ENCODE measurements at regions of chr20 and their contacts with region 1.

Region 1: GRCh38 chr20:2172305-2173175 is 70.9 kb downstream of the STK35 start:
- DNase-seq: peak; percentile 59 to 88
- ATAC-seq: peak; percentile 86 to 89
- H3K4me3 ChIP-seq: no peak overlapping the region; the same call in 2 of the 3 replicates
- H3K27ac ChIP-seq: no peak overlapping the region
- H3K4me1 ChIP-seq: no peaks in the 10 kb centered on the region
- CTCF ChIP-seq: peak; percentile 97
- EP300 ChIP-seq: no peak
- POLR2A ChIP-seq: no peak
- RAD21 ChIP-seq: peak; percentile 97

Region 2: DNA sequence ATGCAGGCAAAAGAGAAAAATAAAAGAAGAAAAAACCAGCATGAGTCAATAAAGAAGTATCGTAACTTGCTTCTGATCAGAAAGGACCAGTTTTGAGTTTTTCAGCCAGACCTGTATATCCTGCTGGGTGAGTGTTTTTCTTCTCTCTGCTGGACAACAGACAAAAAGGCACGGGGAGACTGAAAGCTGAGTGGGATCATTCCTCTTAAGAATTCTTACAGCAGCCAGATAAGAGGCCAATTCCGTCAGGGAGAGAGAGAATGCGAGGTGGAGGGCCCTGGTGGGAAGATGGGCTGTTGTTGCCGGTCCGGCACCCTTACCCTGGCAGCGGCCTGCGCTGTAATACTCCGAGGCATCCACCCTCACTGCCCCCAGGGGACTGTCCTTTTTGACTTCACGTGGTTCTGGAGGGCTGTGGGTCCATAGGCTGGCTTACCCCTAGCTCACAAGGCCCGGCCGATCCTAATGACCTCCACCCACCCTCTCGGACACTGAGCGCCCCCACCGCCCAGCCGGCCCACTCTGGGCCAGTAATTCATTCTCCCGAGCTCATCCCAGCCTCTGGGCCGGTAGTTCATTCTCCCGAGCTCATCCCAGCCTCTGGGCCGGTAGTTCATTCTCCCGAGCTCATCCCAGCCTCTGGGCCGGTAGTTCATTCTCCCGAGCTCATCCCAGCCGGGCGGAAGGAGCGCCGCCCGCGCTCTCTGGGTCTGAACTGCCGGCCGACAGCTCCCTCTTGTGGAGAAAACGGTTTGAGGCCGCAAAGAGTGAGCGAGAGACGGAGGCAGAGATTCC is 395.7 kb before region 1 on chr20:
- CTCF ChIA-PET with region 1: interaction called, 17 read pairs
- POLR2A ChIA-PET with region 1: no interaction called
- DNase-seq: peak; percentile 69 to 89
- ATAC-seq: peak; percentile 95 to 99
- H3K4me3 ChIP-seq: peak overlapping the region; percentile 79
- H3K27ac ChIP-seq: peak overlapping the region; percentile 80 to 91
- H3K4me1 ChIP-seq: peaks cover 20% of the 10 kb centered on the region
- CTCF ChIP-seq: peak; percentile 76
- EP300 ChIP-seq: no peak
- POLR2A ChIP-seq: peak; percentile 39; the same call in 1 of the 2 replicates
- RAD21 ChIP-seq: peak; percentile 71 to 82

Region 3: GRCh38 chr20:2000285-2000684 is 172.3 kb before region 1 on chr20:
- CTCF ChIA-PET with region 1: interaction called, 100 read pairs
- POLR2A ChIA-PET with region 1: no interaction called
- DNase-seq: no peak
- ATAC-seq: no peak
- H3K4me3 ChIP-seq: no peak overlapping the region
- H3K27ac ChIP-seq: no peak overlapping the region
- H3K4me1 ChIP-seq: no peaks in the 10 kb centered on the region
- CTCF ChIP-seq: no peak
- EP300 ChIP-seq: no peak
- POLR2A ChIP-seq: no peak
- RAD21 ChIP-seq: no peak

Region 4: GRCh38 chr20:2101865-2102584 is 70.5 kb before region 1 on chr20:
- CTCF ChIA-PET with region 1: interaction called, 30 read pairs
- POLR2A ChIA-PET with region 1: interaction called, 9 read pairs
- DNase-seq: peak; percentile 96 to 97
- ATAC-seq: peak; percentile 87 to 94
- H3K4me3 ChIP-seq: peak overlapping the region; percentile 92
- H3K27ac ChIP-seq: peak overlapping the region; percentile 97 to 98
- H3K4me1 ChIP-seq: peaks cover 26% of the 10 kb centered on the region; the same call in 2 of the 3 replicates
- CTCF ChIP-seq: no peak
- EP300 ChIP-seq: no peak
- POLR2A ChIP-seq: peak; percentile 79
- RAD21 ChIP-seq: peak in 1 of 2 experiments; percentile 14; a peak in 1 of 5 replicates

Region 5: GRCh38 chr20:2133318-2134183 is 39.0 kb before region 1 on chr20:
- CTCF ChIA-PET with region 1: interaction called, 22 read pairs
- POLR2A ChIA-PET with region 1: no interaction called
- DNase-seq: peak; percentile 35 to 41
- ATAC-seq: peak; percentile 70 to 81; a peak in 5 of 6 replicates
- H3K4me3 ChIP-seq: no peak overlapping the region
- H3K27ac ChIP-seq: peak overlapping the region; percentile 14 to 68; a peak in 4 of 6 replicates
- H3K4me1 ChIP-seq: peaks cover 40% of the 10 kb centered on the region
- CTCF ChIP-seq: no peak
- EP300 ChIP-seq: no peak
- POLR2A ChIP-seq: no peak
- RAD21 ChIP-seq: no peak

Region 6: GRCh38 chr20:2162125-2162822 is 10.3 kb before region 1 on chr20:
- CTCF ChIA-PET with region 1: interaction called, 76 read pairs
- POLR2A ChIA-PET with region 1: no interaction called
- DNase-seq: no peak
- ATAC-seq: no peak
- H3K4me3 ChIP-seq: no peak overlapping the region
- H3K27ac ChIP-seq: no peak overlapping the region
- H3K4me1 ChIP-seq: no peaks in the 10 kb centered on the region
- CTCF ChIP-seq: no peak
- EP300 ChIP-seq: no peak
- POLR2A ChIP-seq: no peak
- RAD21 ChIP-seq: no peak

Region 7: GRCh38 chr20:2470423-2471193 is 298.1 kb after region 1 on chr20 and contains the start of gene SNRPB:
- CTCF ChIA-PET with region 1: no interaction called
- POLR2A ChIA-PET with region 1: no interaction called
- DNase-seq: peak; percentile 99 to 100
- ATAC-seq: peak; percentile 97 to 98
- H3K4me3 ChIP-seq: peak within 1 kb of the TSS; percentile 67
- H3K27ac ChIP-seq: peak within 1 kb of the TSS; percentile 92 to 93
- H3K4me1 ChIP-seq: peaks cover 25% of the 10 kb centered on the region
- CTCF ChIP-seq: no peak
- EP300 ChIP-seq: no peak
- POLR2A ChIP-seq: peak; percentile 91
- RAD21 ChIP-seq: no peak
- polyA plus RNA-seq, gene SNRPB: 486 and 557 TPM in 2 replicates